ENCODE measurements at regions of chr12 and their contacts with region 1.

Region 1: DNA sequence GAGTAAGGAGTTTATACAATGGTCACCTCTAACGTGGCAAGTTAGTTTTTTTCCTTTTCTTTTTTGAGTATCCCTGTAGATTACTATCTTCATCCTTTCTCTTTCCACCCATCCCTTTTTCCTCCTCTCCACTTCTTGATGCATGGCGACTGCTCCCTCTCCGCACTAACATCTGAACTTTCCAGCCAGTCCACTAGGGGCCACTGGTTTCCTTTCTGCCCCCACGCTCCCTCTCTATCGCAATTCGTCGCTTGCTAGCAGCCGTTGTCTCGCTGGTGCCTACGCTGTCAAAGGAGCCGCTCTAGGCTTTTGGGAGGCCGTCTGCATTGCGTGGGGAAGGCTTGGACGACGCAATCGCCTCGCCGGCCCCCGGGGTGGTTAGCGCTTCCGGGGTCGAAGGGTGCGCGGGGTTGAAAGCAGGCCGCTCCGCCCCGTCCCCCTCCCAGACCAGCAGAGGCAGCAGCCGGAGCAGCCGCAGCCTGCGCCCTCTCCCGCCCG is at the start of gene PCBP2:
- DNase-seq: peak; percentile 100
- H3K4me3 ChIP-seq: peak within 1 kb of the TSS; percentile 94
- H3K27ac ChIP-seq: peak within 1 kb of the TSS; percentile 99
- H3K4me1 ChIP-seq: peaks cover 18% of the 10 kb centered on the region
- H3K27me3 ChIP-seq: no peaks in the 10 kb centered on the region
- CTCF ChIP-seq: peak; percentile 97
- total RNA-seq, gene PCBP2: 1,194 and 1,215 TPM in 2 replicates

Region 2: DNA sequence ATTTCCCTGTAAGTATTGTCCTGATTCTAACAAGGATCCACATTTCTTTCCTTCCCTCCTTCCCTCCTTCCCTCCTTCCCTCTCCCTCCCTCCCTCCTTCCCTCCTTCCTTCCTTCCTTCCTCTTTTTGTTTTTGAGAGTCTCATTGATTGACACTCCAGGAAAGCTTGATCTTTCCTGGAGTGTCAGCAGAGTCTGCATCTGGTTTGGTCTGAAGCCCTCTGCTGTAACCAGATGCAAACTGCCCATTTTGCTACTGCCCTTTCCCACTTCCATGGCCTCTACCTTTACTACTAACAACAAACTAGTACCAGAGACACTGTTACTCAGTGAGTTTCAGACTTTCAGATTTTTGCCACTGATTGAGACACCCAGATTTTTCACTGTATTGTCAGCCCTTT is 1934.2 kb after region 1 on chr12:
- CTCF ChIA-PET with region 1: no interaction called
- POLR2A ChIA-PET with region 1: interaction called, 23 read pairs
- intact Hi-C with region 1: no loop called
- DNase-seq: no peak
- H3K4me3 ChIP-seq: no peak overlapping the region
- H3K27ac ChIP-seq: no peak overlapping the region
- H3K4me1 ChIP-seq: no peaks in the 10 kb centered on the region
- H3K27me3 ChIP-seq: peaks cover 26% of the 10 kb centered on the region
- CTCF ChIP-seq: no peak

Measured in A673 (cell line).